Caco-2 (cell line): ENCODE measurements at regions of chr10 and their contacts with region 1.

Region 1: GRCh38 chr10:46077731-46078413 is 31.8 kb upstream of the MSMB start:
- DNase-seq: no peak
- H3K4me3 ChIP-seq: no peak overlapping the region
- H3K4me3 Mint-ChIP-seq: no peak overlapping the region
- H3K27ac Mint-ChIP-seq: no peak overlapping the region
- H3K4me1 ChIP-seq: peaks cover 8% of the 10 kb centered on the region; the same call in 1 of the 2 replicates
- H3K4me1 Mint-ChIP-seq: peaks cover 6% of the 10 kb centered on the region
- H3K27me3 ChIP-seq: no peaks in the 10 kb centered on the region
- H3K27me3 Mint-ChIP-seq: no peaks in the 10 kb centered on the region
- CTCF ChIP-seq: no peak

Region 2: DNA sequence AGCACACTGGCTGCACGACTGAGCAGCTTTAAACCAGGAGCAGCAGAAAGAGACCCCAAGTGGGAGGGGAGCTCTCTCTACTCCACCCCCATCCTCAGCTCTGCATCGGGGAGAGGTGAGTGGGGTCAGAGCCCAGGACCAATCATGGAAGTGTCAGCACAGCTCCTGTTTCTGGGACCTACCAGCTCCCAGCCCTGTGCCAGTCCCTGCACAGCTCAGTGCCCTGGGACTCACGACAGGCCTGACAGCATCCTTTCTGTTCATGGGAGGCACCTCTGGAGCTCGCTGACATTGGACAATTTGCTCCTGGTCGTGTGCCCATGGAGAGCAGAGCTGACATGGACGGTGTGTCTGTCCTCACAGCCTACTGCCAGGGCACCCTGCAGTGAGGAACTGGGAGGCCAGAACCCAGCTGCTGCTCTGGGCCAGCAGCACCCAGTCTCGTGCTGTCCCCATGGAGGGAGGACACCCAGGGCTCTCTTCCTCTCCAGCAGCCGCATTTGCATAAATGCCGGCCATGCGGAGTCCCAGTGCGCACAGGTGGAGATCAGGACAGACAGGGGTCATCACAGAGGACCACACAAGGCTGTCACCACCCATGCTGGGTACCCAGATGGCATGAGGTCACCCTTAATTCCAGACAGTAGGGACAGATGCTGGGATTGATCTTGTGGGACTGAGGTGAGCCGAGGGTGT is 14.1 kb after region 1 on chr10:
- CTCF ChIA-PET with region 1: interaction called, 4 read pairs
- POLR2A ChIA-PET with region 1: no interaction called
- intact Hi-C with region 1: loop called (anchors 2 kb)
- DNase-seq: no peak
- H3K4me3 ChIP-seq: no peak overlapping the region
- H3K4me3 Mint-ChIP-seq: no peak overlapping the region
- H3K27ac Mint-ChIP-seq: no peak overlapping the region
- H3K4me1 ChIP-seq: peaks cover 5% of the 10 kb centered on the region; the same call in 1 of the 2 replicates
- H3K4me1 Mint-ChIP-seq: peaks cover 8% of the 10 kb centered on the region
- H3K27me3 ChIP-seq: no peaks in the 10 kb centered on the region
- H3K27me3 Mint-ChIP-seq: no peaks in the 10 kb centered on the region
- CTCF ChIP-seq: no peak